IMR-90 (cell line): ENCODE measurements at regions of chr7 and their contacts with region 1.

Region 1: GRCh38 chr7:25596443-25596842 is 368.2 kb upstream of the NPVF start:
- DNase-seq: no peak
- ATAC-seq: no peak
- H3K4me3 ChIP-seq: no peak overlapping the region
- H3K27ac ChIP-seq: no peak overlapping the region
- H3K4me1 ChIP-seq: no peaks in the 10 kb centered on the region
- H3K27me3 ChIP-seq: no peaks in the 10 kb centered on the region
- CTCF ChIP-seq: no peak
- POLR2A ChIP-seq: no peak
- RAD21 ChIP-seq: no peak

Region 2: GRCh38 chr7:24732646-24733413 is 863.6 kb before region 1 on chr7:
- CTCF ChIA-PET with region 1: no interaction called
- POLR2A ChIA-PET with region 1: no interaction called
- dilution Hi-C with region 1: no loop called
- in situ Hi-C with region 1: no loop called
- intact Hi-C with region 1: no loop called
- DNase-seq: peak; percentile 92
- ATAC-seq: peak; percentile 81
- H3K4me3 ChIP-seq: no peak overlapping the region
- H3K27ac ChIP-seq: peak overlapping the region; percentile 54; the same call in 1 of the 2 replicates
- H3K4me1 ChIP-seq: peaks cover 21% of the 10 kb centered on the region
- H3K27me3 ChIP-seq: no peaks in the 10 kb centered on the region
- CTCF ChIP-seq: no peak
- POLR2A ChIP-seq: no peak
- RAD21 ChIP-seq: no peak

Region 3: GRCh38 chr7:25456467-25457171 is 139.8 kb before region 1 on chr7:
- CTCF ChIA-PET with region 1: no interaction called
- POLR2A ChIA-PET with region 1: no interaction called
- dilution Hi-C with region 1: no loop called
- in situ Hi-C with region 1: no loop called
- intact Hi-C with region 1: no loop called
- DNase-seq: no peak
- ATAC-seq: no peak
- H3K4me3 ChIP-seq: no peak overlapping the region
- H3K27ac ChIP-seq: no peak overlapping the region
- H3K4me1 ChIP-seq: no peaks in the 10 kb centered on the region
- H3K27me3 ChIP-seq: no peaks in the 10 kb centered on the region; the same call in 1 of the 2 replicates
- CTCF ChIP-seq: no peak
- POLR2A ChIP-seq: no peak
- RAD21 ChIP-seq: no peak

Region 4: GRCh38 chr7:25572423-25572822 is 24.0 kb before region 1 on chr7:
- CTCF ChIA-PET with region 1: no interaction called
- POLR2A ChIA-PET with region 1: no interaction called
- dilution Hi-C with region 1: no loop called
- in situ Hi-C with region 1: no loop called
- intact Hi-C with region 1: loop called (anchors 1 kb)
- DNase-seq: no peak
- ATAC-seq: no peak
- H3K4me3 ChIP-seq: no peak overlapping the region
- H3K27ac ChIP-seq: no peak overlapping the region
- H3K4me1 ChIP-seq: no peaks in the 10 kb centered on the region
- H3K27me3 ChIP-seq: no peaks in the 10 kb centered on the region
- CTCF ChIP-seq: no peak
- POLR2A ChIP-seq: no peak
- RAD21 ChIP-seq: no peak